ENCODE measurements at regions of chr12 and their contacts with region 1.

Region 1: GRCh38 chr12:93419388-93420034 is 22.2 kb downstream of the UBE2N start:
- DNase-seq: no peak
- ATAC-seq: peak; percentile 31
- H3K4me3 Mint-ChIP-seq: no peak overlapping the region
- H3K27ac Mint-ChIP-seq: peak overlapping the region; percentile 44
- H3K4me1 Mint-ChIP-seq: peaks cover 90% of the 10 kb centered on the region
- H3K27me3 Mint-ChIP-seq: no peaks in the 10 kb centered on the region

Region 2: DNA sequence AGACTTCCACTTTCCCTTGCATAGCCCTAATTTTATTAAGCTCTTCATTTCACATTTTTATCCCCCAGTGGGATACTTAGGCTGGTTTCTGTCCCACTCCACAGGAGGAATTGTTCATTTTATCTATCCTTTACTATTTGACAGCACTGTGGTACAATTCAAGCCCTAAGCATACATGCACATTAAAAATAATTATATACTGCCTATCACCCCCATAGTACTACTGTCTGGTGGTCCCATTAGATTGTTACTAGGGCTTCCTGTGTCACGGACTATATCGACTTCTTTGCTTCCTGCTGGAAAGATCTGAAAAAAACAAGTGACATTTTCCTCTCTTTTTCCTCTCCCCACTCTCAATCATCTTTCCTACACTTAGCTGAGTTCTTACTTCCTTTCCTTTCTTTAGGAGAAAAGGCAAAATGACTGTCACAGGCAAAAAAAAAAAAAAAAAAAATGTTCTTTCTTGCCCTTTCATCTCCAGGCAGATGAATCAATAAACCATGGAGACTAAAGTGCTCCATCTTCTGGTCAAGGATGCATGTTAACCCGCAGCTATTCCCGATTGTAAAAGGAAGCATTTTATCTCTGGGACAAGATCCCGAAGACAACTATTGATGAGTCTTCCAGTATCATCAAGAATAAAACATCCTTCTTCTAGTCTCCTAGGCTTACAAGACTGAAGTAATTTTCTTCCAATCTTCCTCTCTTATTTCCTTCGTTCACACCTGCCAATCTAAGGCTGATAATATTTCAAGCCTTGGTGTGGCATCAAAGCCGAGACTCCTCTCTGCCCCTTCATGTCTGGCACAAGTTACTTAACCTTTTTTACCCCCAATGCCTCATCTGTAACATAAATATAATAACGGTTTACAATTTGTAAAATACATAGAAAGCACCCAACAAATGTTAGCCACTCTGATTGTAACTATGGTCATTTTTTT is 811.1 kb before region 1 on chr12:
- CTCF ChIA-PET with region 1: no interaction called
- POLR2A ChIA-PET with region 1: no interaction called
- intact Hi-C with region 1: loop called in 1 of 2 experiments (anchors 10 kb)
- DNase-seq: no peak
- ATAC-seq: no peak
- H3K4me3 Mint-ChIP-seq: peak overlapping the region; percentile 5
- H3K27ac Mint-ChIP-seq: peak overlapping the region; percentile 58
- H3K4me1 Mint-ChIP-seq: peaks cover 30% of the 10 kb centered on the region
- H3K27me3 Mint-ChIP-seq: no peaks in the 10 kb centered on the region

Region 3: DNA sequence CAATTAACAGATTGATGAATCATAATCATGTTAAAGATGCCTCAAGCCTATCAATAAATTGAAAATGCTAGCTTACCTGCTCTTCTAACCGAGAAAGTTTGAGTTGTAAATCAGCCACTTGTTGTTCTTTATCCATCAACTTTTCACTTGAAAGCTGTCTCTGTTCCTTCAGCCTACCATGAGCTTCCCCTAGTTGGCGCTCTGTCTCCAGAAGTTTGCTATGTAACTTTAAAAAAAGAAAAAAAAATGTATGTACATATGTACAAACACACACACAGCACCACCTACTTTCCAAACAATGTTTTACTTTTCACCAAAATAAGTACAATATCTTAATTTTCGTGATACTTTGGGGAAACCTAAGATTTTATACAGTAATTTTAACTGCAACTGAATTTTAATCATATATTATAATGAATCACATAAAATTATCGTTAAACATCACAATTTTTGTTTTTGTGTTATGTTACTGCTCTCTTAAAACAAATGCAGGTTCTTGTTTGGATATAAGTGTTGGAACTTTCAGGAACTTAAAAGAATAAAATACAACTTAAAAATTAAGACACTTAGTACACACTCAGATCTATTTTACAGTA is 591.6 kb before region 1 on chr12:
- CTCF ChIA-PET with region 1: interaction called, 3 read pairs
- POLR2A ChIA-PET with region 1: interaction called, 3 read pairs
- intact Hi-C with region 1: loop called in 1 of 2 experiments (anchors 5 kb)
- DNase-seq: peak; percentile 61
- ATAC-seq: no peak
- H3K4me3 Mint-ChIP-seq: no peak overlapping the region
- H3K27ac Mint-ChIP-seq: no peak overlapping the region
- H3K4me1 Mint-ChIP-seq: peaks cover 2% of the 10 kb centered on the region
- H3K27me3 Mint-ChIP-seq: no peaks in the 10 kb centered on the region

Region 4: GRCh38 chr12:93109551-93110203 is 309.8 kb before region 1 on chr12:
- CTCF ChIA-PET with region 1: interaction called, 13 read pairs
- POLR2A ChIA-PET with region 1: no interaction called
- intact Hi-C with region 1: loop called in 1 of 2 experiments (anchors 5 kb)
- DNase-seq: peak; percentile 75
- ATAC-seq: peak; percentile 93
- H3K4me3 Mint-ChIP-seq: no peak overlapping the region
- H3K27ac Mint-ChIP-seq: peak overlapping the region; percentile 89
- H3K4me1 Mint-ChIP-seq: peaks cover 26% of the 10 kb centered on the region
- H3K27me3 Mint-ChIP-seq: no peaks in the 10 kb centered on the region

Region 5: GRCh38 chr12:93387780-93388179 is 31.7 kb before region 1 on chr12:
- CTCF ChIA-PET with region 1: interaction called, 9 read pairs
- POLR2A ChIA-PET with region 1: no interaction called
- intact Hi-C with region 1: loop called (anchors 1 to 5 kb)
- DNase-seq: peak; percentile 74
- ATAC-seq: peak; percentile 89
- H3K4me3 Mint-ChIP-seq: no peak overlapping the region
- H3K27ac Mint-ChIP-seq: peak overlapping the region; percentile 53
- H3K4me1 Mint-ChIP-seq: peaks cover 62% of the 10 kb centered on the region
- H3K27me3 Mint-ChIP-seq: no peaks in the 10 kb centered on the region

Region 6: DNA sequence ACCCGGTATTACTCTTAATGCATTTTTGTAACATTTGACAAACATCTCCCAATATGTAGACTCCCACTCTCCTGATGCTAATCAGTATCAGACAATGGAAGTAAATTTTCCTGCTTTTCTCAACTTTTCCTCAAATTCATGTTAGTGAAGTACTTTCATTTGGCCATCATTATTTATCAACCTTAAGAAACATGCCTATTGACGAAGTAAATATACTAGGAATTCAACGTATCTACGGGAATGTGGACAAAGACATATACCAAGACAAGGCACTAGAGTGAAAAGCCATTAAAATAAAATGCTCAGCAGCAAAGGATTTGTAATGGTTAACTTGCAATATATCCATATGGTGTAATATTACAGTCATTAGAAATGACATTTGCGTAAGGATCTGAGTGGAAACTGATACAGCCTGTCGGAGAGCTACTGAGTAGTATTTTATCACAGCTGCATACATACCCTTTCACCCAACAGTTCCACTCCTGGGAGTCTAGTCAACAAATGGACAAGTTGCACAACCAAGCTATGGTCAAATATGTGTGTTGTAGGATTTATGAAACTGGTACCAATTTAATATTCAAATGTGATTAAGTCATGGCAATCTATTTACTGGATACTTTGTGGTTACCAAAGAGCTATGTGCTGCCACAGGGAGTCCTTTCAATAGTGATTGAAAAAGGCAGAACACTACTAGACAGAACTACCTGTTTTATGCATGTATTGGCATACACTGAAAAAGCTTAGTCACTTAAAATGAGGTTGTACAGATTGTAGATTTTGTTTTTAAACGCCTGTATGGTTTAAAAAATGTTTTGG is 15.3 kb before region 1 on chr12:
- CTCF ChIA-PET with region 1: interaction called, 61 read pairs
- POLR2A ChIA-PET with region 1: interaction called, 11 read pairs
- intact Hi-C with region 1: loop called in 1 of 2 experiments (anchors 2 kb)
- DNase-seq: no peak
- ATAC-seq: no peak
- H3K4me3 Mint-ChIP-seq: no peak overlapping the region
- H3K27ac Mint-ChIP-seq: peak overlapping the region; percentile 34
- H3K4me1 Mint-ChIP-seq: peaks cover 49% of the 10 kb centered on the region
- H3K27me3 Mint-ChIP-seq: no peaks in the 10 kb centered on the region

Measured in activated CD4-positive, alpha-beta T cell treated with anti-CD3 and anti-CD28 coated beads for 36 hours (primary cell).